Calu3 (cell line): ENCODE measurements at regions of chr18 and their contacts with region 1.

Region 1: GRCh38 chr18:31317860-31318259 is at the start of gene DSG1:
- DNase-seq: no peak
- H3K4me3 Mint-ChIP-seq: no peak within 1 kb of the TSS
- H3K27ac Mint-ChIP-seq: no peak within 1 kb of the TSS
- H3K4me1 Mint-ChIP-seq: no peaks in the 10 kb centered on the region
- H3K27me3 Mint-ChIP-seq: no peaks in the 10 kb centered on the region
- CTCF ChIP-seq: no peak
- total RNA-seq, gene DSG1: not detected in 2 replicates

Region 2: DNA sequence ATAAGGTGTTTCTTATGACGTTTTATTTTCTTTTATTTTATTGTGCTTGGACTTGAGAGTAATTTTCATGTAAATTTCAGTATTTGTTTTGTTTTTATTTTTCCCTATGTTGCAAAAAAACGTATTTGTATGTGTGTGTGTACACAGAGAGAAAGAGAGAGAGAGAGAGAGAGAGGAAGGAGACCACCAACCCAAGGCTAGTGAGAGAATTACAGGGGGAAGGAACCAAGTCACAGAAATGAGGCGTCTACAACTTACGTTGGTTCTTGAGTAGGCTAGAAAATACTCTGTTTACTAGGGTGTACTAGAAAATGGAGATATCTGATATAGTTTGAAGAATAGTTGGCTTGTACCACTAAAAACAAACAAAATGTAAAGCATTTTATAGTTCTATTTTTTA is 147.5 kb before region 1 on chr18:
- CTCF ChIA-PET with region 1: no interaction called
- intact Hi-C with region 1: no loop called
- DNase-seq: no peak
- H3K4me3 Mint-ChIP-seq: no peak overlapping the region
- H3K27ac Mint-ChIP-seq: no peak overlapping the region
- H3K4me1 Mint-ChIP-seq: no peaks in the 10 kb centered on the region
- H3K27me3 Mint-ChIP-seq: no peaks in the 10 kb centered on the region
- CTCF ChIP-seq: no peak

Region 3: DNA sequence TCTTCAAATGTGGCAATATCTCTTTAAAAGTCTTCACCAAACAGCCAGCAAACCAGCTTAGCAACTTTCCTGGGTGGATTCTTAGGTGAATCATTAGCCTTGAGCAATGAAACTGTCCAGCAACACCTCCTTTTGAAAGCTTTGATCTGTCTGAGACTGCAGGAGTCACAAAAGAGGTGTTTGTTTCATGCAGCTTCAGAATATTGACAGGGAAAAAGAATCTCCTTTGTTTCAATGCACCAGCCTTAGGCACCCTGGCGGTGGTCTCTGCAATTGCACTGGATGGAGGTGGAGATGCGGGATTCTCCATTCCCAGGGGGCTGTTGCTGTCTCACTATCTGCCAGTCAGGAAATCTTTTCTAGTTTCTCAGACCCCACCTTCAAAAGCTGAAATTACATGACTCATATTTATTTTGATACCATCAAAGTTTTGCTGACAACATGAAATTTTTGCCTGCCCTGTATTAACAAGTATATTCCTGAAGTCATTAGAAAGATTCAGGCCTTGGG is 75.9 kb before region 1 on chr18:
- CTCF ChIA-PET with region 1: no interaction called
- intact Hi-C with region 1: no loop called
- DNase-seq: peak; percentile 86
- H3K4me3 Mint-ChIP-seq: peak overlapping the region; percentile 30
- H3K27ac Mint-ChIP-seq: peak overlapping the region; percentile 92
- H3K4me1 Mint-ChIP-seq: peaks cover 65% of the 10 kb centered on the region
- H3K27me3 Mint-ChIP-seq: no peaks in the 10 kb centered on the region
- CTCF ChIP-seq: peak; percentile 92

Region 4: DNA sequence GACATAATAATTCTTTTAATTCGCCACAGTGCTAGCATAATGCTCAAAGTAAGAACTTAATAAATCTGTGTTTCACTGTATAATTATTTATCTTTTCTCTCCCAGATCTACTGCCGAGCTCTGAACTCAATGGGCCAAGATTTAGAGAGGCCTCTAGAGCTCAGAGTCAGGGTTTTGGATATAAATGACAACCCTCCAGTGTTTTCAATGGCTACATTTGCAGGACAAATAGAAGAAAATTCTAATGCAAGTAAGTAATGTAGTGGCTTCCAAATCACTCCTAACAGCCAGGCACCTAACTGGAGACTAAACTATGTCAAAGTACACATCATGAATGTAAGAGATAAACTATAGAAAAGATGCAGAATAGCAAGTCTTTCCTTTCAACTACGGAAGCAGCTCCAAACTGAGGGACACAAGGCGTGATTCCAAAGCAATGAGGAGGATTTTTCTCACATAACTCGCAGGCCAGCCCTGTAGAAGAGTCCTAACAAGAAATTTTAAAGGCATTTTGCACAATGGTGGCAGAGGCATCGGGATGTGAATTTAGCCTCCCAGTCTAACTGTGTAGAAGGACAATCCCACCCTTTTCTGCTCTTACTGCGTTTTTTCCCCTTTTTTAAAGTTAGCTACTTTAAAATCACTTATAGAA is 12.1 kb after region 1 on chr18:
- CTCF ChIA-PET with region 1: no interaction called
- intact Hi-C with region 1: loop called (anchors 1 kb)
- DNase-seq: no peak
- H3K4me3 Mint-ChIP-seq: no peak overlapping the region
- H3K27ac Mint-ChIP-seq: no peak overlapping the region
- H3K4me1 Mint-ChIP-seq: no peaks in the 10 kb centered on the region
- H3K27me3 Mint-ChIP-seq: no peaks in the 10 kb centered on the region
- CTCF ChIP-seq: no peak